Ovary (tissue), 10 donors: ENCODE measurements at regions of chr15 and their contacts with region 1.

Region 1: DNA sequence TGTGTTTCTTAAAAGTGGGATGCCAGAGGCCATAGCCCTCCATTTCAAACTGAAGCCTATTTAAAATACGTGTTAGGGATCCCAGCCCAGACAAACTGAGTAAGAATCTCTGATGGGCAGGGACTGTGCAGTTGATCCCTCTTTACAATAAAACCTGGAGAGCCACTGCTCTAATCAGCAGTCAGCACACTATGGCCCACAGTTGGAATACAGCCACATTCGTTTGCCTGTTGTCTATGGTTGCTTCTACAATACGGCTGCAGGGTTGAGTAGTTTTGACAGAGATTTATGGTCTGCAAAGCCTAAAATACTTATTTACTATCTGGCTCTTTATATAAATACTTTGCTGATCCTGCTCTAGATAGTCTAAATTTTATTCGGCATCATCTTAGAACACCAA is 32.4 kb downstream of the TJP1 start:
- DNase-seq: no peak
- H3K4me3 ChIP-seq: no peak overlapping the region
- H3K27ac ChIP-seq: no peak overlapping the region
- H3K4me1 ChIP-seq: no peaks in the 10 kb centered on the region
- H3K27me3 ChIP-seq: no peaks in the 10 kb centered on the region
- CTCF ChIP-seq: no peak
- EP300 ChIP-seq: no peak
- POLR2A ChIP-seq: no peak

Region 2: GRCh38 chr15:29774900-29775299 is 15.0 kb before region 1 on chr15:
- intact Hi-C with region 1: loop called in 1 of 4 experiments (anchors 2 kb)
- DNase-seq: no peak
- H3K4me3 ChIP-seq: no peak overlapping the region
- H3K27ac ChIP-seq: no peak overlapping the region
- H3K4me1 ChIP-seq: no peaks in the 10 kb centered on the region
- H3K27me3 ChIP-seq: no peaks in the 10 kb centered on the region
- CTCF ChIP-seq: no peak
- EP300 ChIP-seq: no peak
- POLR2A ChIP-seq: no peak

Region 3: DNA sequence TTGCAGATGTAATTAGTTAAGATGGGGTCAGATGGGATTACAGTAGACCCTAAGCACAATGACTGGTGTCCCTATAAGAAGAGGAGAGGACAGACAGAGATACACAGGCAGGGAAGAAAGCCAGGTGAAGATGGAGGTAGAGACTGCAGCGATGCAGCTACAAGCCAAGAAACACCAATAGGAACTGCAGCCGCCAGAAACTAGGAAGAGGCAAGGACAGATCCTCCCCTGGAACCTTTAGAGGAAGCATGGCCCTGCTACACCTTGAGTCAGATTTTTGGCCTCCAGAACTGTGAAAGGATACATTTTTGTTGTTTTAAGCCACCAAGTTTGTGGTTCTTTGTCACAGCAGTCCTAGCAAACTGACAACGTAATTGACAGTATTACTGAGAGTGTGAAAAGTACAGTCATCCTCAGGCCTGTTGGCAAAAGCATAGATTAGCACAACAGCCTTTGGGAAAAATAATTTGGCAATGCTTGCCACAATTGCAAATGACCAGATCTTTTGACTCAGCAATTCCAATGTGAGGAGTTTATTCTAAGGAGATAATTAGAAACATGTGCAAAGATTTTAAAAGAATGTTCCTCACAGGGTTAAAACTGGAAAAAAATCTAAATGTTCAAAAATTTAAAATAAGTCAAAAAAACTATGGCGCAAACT is 115.0 kb after region 1 on chr15:
- intact Hi-C with region 1: no loop called
- DNase-seq: no peak
- H3K4me3 ChIP-seq: no peak overlapping the region
- H3K27ac ChIP-seq: no peak overlapping the region
- H3K4me1 ChIP-seq: no peaks in the 10 kb centered on the region
- H3K27me3 ChIP-seq: no peaks in the 10 kb centered on the region
- CTCF ChIP-seq: no peak
- EP300 ChIP-seq: no peak
- POLR2A ChIP-seq: no peak

Region 4: DNA sequence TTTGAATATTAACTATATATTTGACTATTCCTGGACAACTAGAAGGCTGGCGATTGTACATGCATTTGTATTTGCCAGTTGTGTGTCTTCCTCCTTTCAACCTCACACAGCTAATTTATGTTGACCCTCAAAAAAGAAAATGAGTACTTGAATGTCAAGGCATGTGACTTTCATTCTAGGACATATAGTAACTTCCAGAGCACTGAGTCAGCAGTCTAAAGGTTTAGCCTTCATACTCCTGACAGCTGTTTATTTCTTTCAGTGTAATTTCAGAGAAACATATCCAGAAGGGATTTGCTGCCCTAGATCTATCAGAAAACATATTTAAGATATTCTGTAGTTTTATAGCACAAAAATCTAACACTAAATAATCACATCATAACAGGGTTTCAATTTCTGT is 218.3 kb after region 1 on chr15:
- intact Hi-C with region 1: no loop called
- DNase-seq: no peak
- H3K4me3 ChIP-seq: no peak overlapping the region
- H3K27ac ChIP-seq: no peak overlapping the region
- H3K4me1 ChIP-seq: no peaks in the 10 kb centered on the region
- H3K27me3 ChIP-seq: no peaks in the 10 kb centered on the region
- CTCF ChIP-seq: no peak
- EP300 ChIP-seq: no peak
- POLR2A ChIP-seq: no peak

Region 5: DNA sequence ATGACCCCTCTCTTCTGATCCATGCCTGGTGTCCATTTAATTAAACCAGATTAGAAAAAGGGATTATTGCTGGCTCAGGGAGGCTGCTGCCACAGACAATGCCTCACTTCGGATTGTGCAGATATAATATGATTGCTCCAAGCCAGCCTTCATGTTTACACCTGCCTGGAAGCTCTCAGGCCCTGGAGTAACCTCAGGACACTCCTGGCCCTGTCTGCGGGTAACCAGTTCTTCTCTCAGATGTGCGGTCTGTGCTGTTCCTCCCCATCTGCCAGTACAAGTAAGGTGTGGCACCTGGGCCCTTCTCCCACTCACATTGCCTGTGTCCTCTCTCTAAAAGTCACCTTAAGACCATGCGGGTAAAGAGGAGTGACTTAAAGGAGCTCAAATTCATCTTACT is 284.0 kb after region 1 on chr15:
- intact Hi-C with region 1: no loop called
- DNase-seq: no peak
- H3K4me3 ChIP-seq: no peak overlapping the region
- H3K27ac ChIP-seq: no peak overlapping the region
- H3K4me1 ChIP-seq: no peaks in the 10 kb centered on the region
- H3K27me3 ChIP-seq: no peaks in the 10 kb centered on the region
- CTCF ChIP-seq: no peak
- EP300 ChIP-seq: no peak
- POLR2A ChIP-seq: no peak